Panc1 (cell line): ENCODE measurements at regions of chr11 and their contacts with region 1.

Region 1: DNA sequence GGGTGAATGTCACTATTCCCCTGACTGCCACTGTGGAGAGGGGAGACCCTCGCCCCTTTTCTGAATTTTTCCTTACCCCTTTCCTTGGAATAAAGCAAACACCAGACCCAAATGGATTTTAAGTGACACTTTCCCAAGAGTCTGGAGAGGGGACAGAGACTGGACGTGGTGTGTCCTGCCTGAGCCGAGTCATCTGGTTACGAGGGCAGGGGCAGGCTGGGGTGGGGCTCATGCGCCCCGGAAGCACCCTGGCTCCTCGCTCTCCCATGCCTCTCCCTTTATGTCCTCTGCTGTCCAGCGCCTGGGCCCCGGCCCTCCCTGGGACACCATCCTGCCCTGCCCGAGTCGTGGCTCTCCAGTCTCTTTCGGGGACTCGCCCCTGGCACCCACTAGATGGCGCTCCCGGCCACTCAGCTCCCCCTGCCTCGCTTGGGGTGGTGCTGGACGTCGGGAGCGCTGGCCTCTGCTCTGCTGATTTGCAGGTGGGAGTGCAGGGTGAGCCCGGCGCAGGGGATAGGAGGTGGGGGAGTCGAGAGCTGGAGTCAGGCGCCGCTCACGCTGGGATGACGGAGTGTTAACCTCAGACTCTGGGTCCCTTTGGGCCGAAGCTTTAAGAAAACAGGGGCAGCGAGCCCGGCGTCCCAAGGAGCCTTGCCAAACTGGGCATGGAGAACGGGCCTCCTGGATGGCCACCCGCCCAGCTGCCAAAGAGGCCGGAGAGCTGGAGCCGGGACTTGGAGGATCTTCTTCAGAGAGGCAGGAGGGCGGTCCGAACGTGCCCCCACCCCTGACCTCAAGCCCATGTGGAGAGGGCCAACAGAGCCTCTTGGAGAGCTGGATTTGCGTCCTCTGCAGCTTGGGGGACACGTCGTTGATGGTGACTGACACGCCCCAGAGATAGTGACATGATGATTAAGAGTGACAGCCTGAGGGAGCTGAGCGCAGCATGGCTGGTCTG is 89.9 kb downstream of the RPS6KA4 start:
- DNase-seq: peak; percentile 47
- ATAC-seq: peak; percentile 97
- H3K4me3 ChIP-seq: peak overlapping the region; percentile 30 to 56
- H3K27ac ChIP-seq: no peak overlapping the region
- H3K4me1 ChIP-seq: peaks cover 15% of the 10 kb centered on the region
- H3K27me3 ChIP-seq: peaks cover 6% of the 10 kb centered on the region; the same call in 1 of the 2 replicates
- CTCF ChIP-seq: peak; percentile 95

Region 2: DNA sequence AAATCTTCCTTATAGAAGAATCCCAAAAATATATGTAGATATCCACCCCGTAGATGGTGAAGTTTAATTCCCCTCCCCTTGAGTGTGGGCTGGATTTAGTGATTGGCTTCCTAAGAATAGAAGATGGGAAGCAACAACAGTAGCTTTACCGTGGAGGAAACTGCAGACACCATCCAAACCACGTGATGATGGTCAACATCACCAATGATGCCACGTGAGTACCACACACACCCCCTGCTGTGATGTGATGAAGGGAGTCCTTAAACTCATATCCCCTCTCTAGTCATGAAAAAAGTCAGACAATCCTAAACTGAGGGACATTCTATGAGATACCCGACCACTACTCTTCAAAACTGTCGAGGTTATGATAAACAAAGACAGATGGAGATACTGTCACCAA is 65.7 kb after region 1 on chr11:
- CTCF ChIA-PET with region 1: no interaction called
- POLR2A ChIA-PET with region 1: no interaction called
- in situ Hi-C with region 1: no loop called
- intact Hi-C with region 1: no loop called
- DNase-seq: no peak
- ATAC-seq: no peak
- H3K4me3 ChIP-seq: no peak overlapping the region
- H3K27ac ChIP-seq: no peak overlapping the region
- H3K4me1 ChIP-seq: no peaks in the 10 kb centered on the region
- H3K27me3 ChIP-seq: peaks cover 16% of the 10 kb centered on the region
- CTCF ChIP-seq: no peak

Region 3: DNA sequence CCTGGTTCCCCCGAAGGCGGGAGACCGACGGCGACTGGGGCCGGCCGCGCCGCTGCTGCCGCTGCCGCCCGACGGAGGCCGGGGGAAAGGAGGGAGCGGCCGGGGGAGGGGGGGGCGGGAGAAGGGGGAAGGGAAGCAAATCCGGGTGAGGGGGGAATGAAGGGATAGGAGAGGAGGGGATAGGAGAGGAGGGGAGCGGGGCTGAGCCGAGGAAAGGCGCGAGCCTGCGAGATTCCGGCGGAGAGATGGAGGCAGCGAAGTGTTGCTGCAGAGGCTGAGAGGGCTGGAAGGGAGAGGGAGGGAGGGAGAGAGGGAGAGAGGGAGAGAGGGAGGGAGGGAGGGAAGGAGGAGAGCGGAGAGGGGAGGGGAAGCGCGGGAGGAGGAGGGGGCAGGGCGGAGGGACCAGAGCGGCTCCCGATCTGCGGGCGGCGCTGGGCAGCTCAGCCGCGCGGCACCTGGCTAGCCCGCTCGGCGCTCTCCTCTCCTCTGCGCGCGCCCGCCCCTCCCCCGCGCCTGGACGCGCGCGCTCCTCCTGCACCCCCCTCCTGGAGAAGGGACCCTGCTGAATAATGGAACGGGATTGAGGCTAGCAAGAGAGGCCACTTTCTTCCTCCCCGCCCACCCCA is 194.5 kb after region 1 on chr11:
- CTCF ChIA-PET with region 1: interaction called, 10 read pairs
- POLR2A ChIA-PET with region 1: interaction called, 3 read pairs
- in situ Hi-C with region 1: no loop called
- intact Hi-C with region 1: no loop called
- DNase-seq: no peak
- ATAC-seq: peak; percentile 52; the same call in 1 of the 2 replicates
- H3K4me3 ChIP-seq: no peak overlapping the region
- H3K27ac ChIP-seq: no peak overlapping the region
- H3K4me1 ChIP-seq: no peaks in the 10 kb centered on the region
- H3K27me3 ChIP-seq: peaks cover 25% of the 10 kb centered on the region
- CTCF ChIP-seq: no peak

Region 4: GRCh38 chr11:64900263-64900678 is 451.4 kb after region 1 on chr11:
- CTCF ChIA-PET with region 1: no interaction called
- POLR2A ChIA-PET with region 1: no interaction called
- in situ Hi-C with region 1: no loop called
- intact Hi-C with region 1: no loop called
- DNase-seq: no peak
- ATAC-seq: peak; percentile 70
- H3K4me3 ChIP-seq: no peak overlapping the region
- H3K27ac ChIP-seq: peak overlapping the region; percentile 36
- H3K4me1 ChIP-seq: peaks cover 7% of the 10 kb centered on the region
- H3K27me3 ChIP-seq: no peaks in the 10 kb centered on the region
- CTCF ChIP-seq: no peak

Region 5: GRCh38 chr11:64951529-64951928 is 502.7 kb after region 1 on chr11:
- CTCF ChIA-PET with region 1: no interaction called
- POLR2A ChIA-PET with region 1: no interaction called
- in situ Hi-C with region 1: no loop called
- intact Hi-C with region 1: no loop called
- DNase-seq: no peak
- ATAC-seq: no peak
- H3K4me3 ChIP-seq: no peak overlapping the region
- H3K27ac ChIP-seq: no peak overlapping the region
- H3K4me1 ChIP-seq: no peaks in the 10 kb centered on the region
- H3K27me3 ChIP-seq: no peaks in the 10 kb centered on the region; the same call in 1 of the 2 replicates
- CTCF ChIP-seq: no peak